ENCODE measurements at regions of chr14 and their contacts with region 1.

Region 1: GRCh38 chr14:22375321-22375930 is 213.6 kb downstream of the DAD1 start:
- DNase-seq: peak in 1 of 2 experiments; percentile 37
- H3K4me3 ChIP-seq: no peak overlapping the region
- H3K27ac ChIP-seq: no peak overlapping the region
- H3K4me1 ChIP-seq: no peaks in the 10 kb centered on the region
- H3K27me3 ChIP-seq: no peaks in the 10 kb centered on the region
- CTCF ChIP-seq: peak; percentile 71

Region 2: DNA sequence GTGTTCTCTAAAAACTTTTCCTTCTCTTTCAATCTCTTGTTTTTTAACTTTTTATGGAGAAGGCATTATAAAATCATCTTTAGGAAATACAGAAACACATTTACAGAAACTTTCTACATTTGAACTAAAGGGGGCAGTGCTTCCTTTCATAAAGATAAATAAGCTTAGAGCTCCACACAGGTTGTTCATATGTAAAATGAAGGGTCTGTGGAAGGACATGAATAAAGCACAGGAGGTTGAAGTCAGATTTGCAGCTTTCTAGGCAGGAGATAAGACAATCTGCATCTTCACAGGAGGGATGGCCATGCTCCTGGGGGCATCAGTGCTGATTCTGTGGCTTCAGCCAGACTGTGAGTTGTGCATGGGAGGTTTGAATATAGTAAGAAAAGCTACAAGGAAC is 212.4 kb before region 1 on chr14:
- CTCF ChIA-PET with region 1: interaction called, 11 read pairs
- POLR2A ChIA-PET with region 1: interaction called, 8 read pairs
- intact Hi-C with region 1: no loop called
- DNase-seq: no peak
- H3K4me3 ChIP-seq: no peak overlapping the region
- H3K27ac ChIP-seq: no peak overlapping the region
- H3K4me1 ChIP-seq: peaks cover 41% of the 10 kb centered on the region
- H3K27me3 ChIP-seq: no peaks in the 10 kb centered on the region
- CTCF ChIP-seq: peak; percentile 57

Region 3: GRCh38 chr14:22221508-22221907 is 153.9 kb before region 1 on chr14:
- CTCF ChIA-PET with region 1: interaction called, 11 read pairs
- POLR2A ChIA-PET with region 1: no interaction called
- intact Hi-C with region 1: loop called (anchors 1 kb)
- DNase-seq: no peak
- H3K4me3 ChIP-seq: no peak overlapping the region
- H3K27ac ChIP-seq: no peak overlapping the region
- H3K4me1 ChIP-seq: peaks cover 18% of the 10 kb centered on the region
- H3K27me3 ChIP-seq: no peaks in the 10 kb centered on the region
- CTCF ChIP-seq: peak; percentile 48; the same call in 1 of the 2 replicates

Region 4: GRCh38 chr14:22314181-22314820 is 61.1 kb before region 1 on chr14:
- CTCF ChIA-PET with region 1: interaction called, 22 read pairs
- POLR2A ChIA-PET with region 1: interaction called, 13 read pairs
- intact Hi-C with region 1: no loop called
- DNase-seq: no peak
- H3K4me3 ChIP-seq: no peak overlapping the region
- H3K27ac ChIP-seq: no peak overlapping the region
- H3K4me1 ChIP-seq: no peaks in the 10 kb centered on the region
- H3K27me3 ChIP-seq: no peaks in the 10 kb centered on the region
- CTCF ChIP-seq: peak; percentile 73

Region 5: GRCh38 chr14:22319526-22320361 is 55.7 kb before region 1 on chr14:
- CTCF ChIA-PET with region 1: interaction called, 22 read pairs
- POLR2A ChIA-PET with region 1: interaction called, 13 read pairs
- intact Hi-C with region 1: loop called (anchors 1 kb)
- DNase-seq: peak; percentile 40 to 48
- H3K4me3 ChIP-seq: no peak overlapping the region
- H3K27ac ChIP-seq: no peak overlapping the region
- H3K4me1 ChIP-seq: no peaks in the 10 kb centered on the region
- H3K27me3 ChIP-seq: no peaks in the 10 kb centered on the region
- CTCF ChIP-seq: peak; percentile 76